ENCODE measurements at regions of chr3 and their contacts with region 1.

Region 1: GRCh38 chr3:33798411-33799201 is at the start of gene PDCD6IP:
- DNase-seq: peak; percentile 93
- ATAC-seq: peak; percentile 88
- H3K4me3 Mint-ChIP-seq: peak within 1 kb of the TSS; percentile 82
- H3K27ac Mint-ChIP-seq: peak within 1 kb of the TSS; percentile 95
- H3K4me1 Mint-ChIP-seq: peaks cover 51% of the 10 kb centered on the region
- H3K27me3 Mint-ChIP-seq: no peaks in the 10 kb centered on the region
- total RNA-seq, gene PDCD6IP: 141 to 150 TPM

Region 2: GRCh38 chr3:33456756-33457155 is 341.9 kb before region 1 on chr3:
- CTCF ChIA-PET with region 1: no interaction called
- POLR2A ChIA-PET with region 1: no interaction called
- intact Hi-C with region 1: no loop called
- DNase-seq: no peak
- ATAC-seq: no peak
- H3K4me3 Mint-ChIP-seq: no peak overlapping the region
- H3K27ac Mint-ChIP-seq: no peak overlapping the region
- H3K4me1 Mint-ChIP-seq: peaks cover 4% of the 10 kb centered on the region
- H3K27me3 Mint-ChIP-seq: peaks cover 2% of the 10 kb centered on the region

Region 3: DNA sequence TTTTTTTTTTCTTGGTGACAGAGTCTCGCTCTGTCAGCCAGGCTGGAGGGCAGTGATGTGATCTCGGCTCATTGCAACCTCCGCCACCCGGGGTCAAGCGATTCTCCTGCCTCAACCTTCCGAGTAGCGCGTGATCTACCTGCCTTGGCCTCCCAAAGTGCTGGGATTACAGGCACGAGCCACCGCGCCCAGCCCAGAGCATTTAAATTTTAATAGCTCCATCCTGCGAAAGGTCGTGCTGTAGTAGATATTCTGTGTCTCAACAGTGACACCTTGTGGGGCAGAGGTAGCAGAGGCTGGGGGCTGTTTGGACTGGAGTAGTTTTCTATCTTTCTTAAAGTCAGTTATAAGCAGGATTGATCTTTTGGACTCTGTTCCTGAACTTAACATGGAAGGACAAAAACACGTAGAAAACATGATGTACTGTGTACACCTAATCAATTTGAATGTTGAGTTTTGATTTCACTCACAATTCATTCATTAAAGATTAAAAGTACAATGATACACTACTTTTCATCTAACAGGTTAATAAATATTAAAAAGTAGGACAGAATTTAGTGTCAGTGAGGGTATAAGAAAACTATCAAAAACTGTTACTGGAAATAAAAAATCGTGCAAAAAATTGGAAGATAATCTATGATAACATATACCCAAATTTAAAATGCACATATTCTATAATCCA is 11.1 kb before region 1 on chr3:
- CTCF ChIA-PET with region 1: interaction called, 42 read pairs
- POLR2A ChIA-PET with region 1: interaction called, 7 read pairs
- intact Hi-C with region 1: no loop called
- DNase-seq: peak; percentile 72
- ATAC-seq: peak; percentile 87
- H3K4me3 Mint-ChIP-seq: peak overlapping the region; percentile 36
- H3K27ac Mint-ChIP-seq: no peak overlapping the region
- H3K4me1 Mint-ChIP-seq: peaks cover 7% of the 10 kb centered on the region
- H3K27me3 Mint-ChIP-seq: peaks cover 6% of the 10 kb centered on the region

Region 4: GRCh38 chr3:33810545-33810944 is 11.9 kb after region 1 on chr3:
- CTCF ChIA-PET with region 1: interaction called, 13 read pairs
- POLR2A ChIA-PET with region 1: interaction called, 3 read pairs
- intact Hi-C with region 1: no loop called
- DNase-seq: no peak
- ATAC-seq: no peak
- H3K4me3 Mint-ChIP-seq: no peak overlapping the region
- H3K27ac Mint-ChIP-seq: no peak overlapping the region
- H3K4me1 Mint-ChIP-seq: peaks cover 49% of the 10 kb centered on the region
- H3K27me3 Mint-ChIP-seq: no peaks in the 10 kb centered on the region

Measured in activated CD4-positive, alpha-beta T cell treated with anti-CD3 and anti-CD28 coated beads for 36 hours (primary cell).